Activated B cell treated with CpG ODN at 0.5 μM for 24 hours (primary cell): ENCODE measurements at regions of chr18 and their contacts with region 1.

Region 1: GRCh38 chr18:59139371-59140298 is at the start of gene SEC11C:
- DNase-seq: peak; percentile 93
- ATAC-seq: peak; percentile 84
- H3K4me3 Mint-ChIP-seq: peak within 1 kb of the TSS; percentile 95
- H3K27ac Mint-ChIP-seq: peak within 1 kb of the TSS; percentile 100
- H3K4me1 Mint-ChIP-seq: peaks cover 44% of the 10 kb centered on the region
- H3K27me3 Mint-ChIP-seq: peaks cover 8% of the 10 kb centered on the region
- CTCF ChIP-seq: no peak
- total RNA-seq, gene SEC11C: 112 and 126 TPM in 2 replicates

Region 2: GRCh38 chr18:58223717-58224424 is 915.8 kb before region 1 on chr18:
- CTCF ChIA-PET with region 1: no interaction called
- POLR2A ChIA-PET with region 1: interaction called, 5 read pairs
- intact Hi-C with region 1: loop called (anchors 5 kb)
- DNase-seq: no peak
- ATAC-seq: no peak
- H3K4me3 Mint-ChIP-seq: peak overlapping the region; percentile 47
- H3K27ac Mint-ChIP-seq: peak overlapping the region; percentile 72
- H3K4me1 Mint-ChIP-seq: peaks cover 51% of the 10 kb centered on the region
- H3K27me3 Mint-ChIP-seq: no peaks in the 10 kb centered on the region
- CTCF ChIP-seq: no peak

Region 3: GRCh38 chr18:58863539-58864145 is 276.0 kb before region 1 on chr18:
- CTCF ChIA-PET with region 1: no interaction called
- POLR2A ChIA-PET with region 1: no interaction called
- intact Hi-C with region 1: loop called (anchors 5 kb)
- DNase-seq: peak; percentile 61
- ATAC-seq: peak; percentile 66
- H3K4me3 Mint-ChIP-seq: peak overlapping the region; percentile 76
- H3K27ac Mint-ChIP-seq: peak overlapping the region; percentile 85
- H3K4me1 Mint-ChIP-seq: peaks cover 32% of the 10 kb centered on the region
- H3K27me3 Mint-ChIP-seq: no peaks in the 10 kb centered on the region
- CTCF ChIP-seq: no peak

Region 4: GRCh38 chr18:59093668-59094067 is 46.0 kb before region 1 on chr18:
- CTCF ChIA-PET with region 1: interaction called, 3 read pairs
- POLR2A ChIA-PET with region 1: interaction called, 8 read pairs
- intact Hi-C with region 1: loop called (anchors 2 kb)
- DNase-seq: no peak
- ATAC-seq: peak; percentile 96
- H3K4me3 Mint-ChIP-seq: peak overlapping the region; percentile 55
- H3K27ac Mint-ChIP-seq: peak overlapping the region; percentile 89
- H3K4me1 Mint-ChIP-seq: peaks cover 23% of the 10 kb centered on the region
- H3K27me3 Mint-ChIP-seq: no peaks in the 10 kb centered on the region
- CTCF ChIP-seq: no peak

Region 5: DNA sequence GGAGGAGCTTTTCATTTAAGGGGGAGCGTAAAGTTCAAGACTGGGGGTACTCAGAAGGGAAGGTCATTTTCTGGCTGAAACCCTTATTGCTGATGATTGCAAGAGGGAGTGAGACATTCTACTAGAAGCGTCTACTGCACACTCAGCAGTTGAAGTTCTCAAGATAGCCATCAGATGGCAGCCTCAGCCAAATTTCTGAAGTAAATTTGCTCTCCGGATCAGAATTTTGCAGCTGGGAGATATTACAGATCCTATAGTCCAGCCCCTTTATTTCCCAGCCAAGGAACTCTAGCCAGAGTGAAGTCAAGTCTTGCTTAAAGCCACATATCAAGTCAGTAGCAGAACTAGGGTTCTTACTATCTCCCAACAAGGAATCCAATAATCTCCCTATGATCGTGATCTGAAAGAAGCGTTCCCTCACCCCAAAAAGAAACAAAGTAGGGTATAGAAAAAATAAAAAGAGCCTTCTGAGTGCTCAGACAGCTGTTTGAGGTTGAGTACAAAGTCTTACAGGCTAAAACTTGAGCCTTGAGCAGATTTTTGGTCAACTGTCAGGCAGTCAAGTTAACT is 109.7 kb after region 1 on chr18:
- CTCF ChIA-PET with region 1: no interaction called
- POLR2A ChIA-PET with region 1: no interaction called
- intact Hi-C with region 1: no loop called
- DNase-seq: no peak
- ATAC-seq: peak; percentile 49
- H3K4me3 Mint-ChIP-seq: no peak overlapping the region
- H3K27ac Mint-ChIP-seq: no peak overlapping the region
- H3K4me1 Mint-ChIP-seq: no peaks in the 10 kb centered on the region
- H3K27me3 Mint-ChIP-seq: peaks cover 37% of the 10 kb centered on the region
- CTCF ChIP-seq: no peak